ENCODE measurements at regions of chr9 and their contacts with region 1.

Region 1: DNA sequence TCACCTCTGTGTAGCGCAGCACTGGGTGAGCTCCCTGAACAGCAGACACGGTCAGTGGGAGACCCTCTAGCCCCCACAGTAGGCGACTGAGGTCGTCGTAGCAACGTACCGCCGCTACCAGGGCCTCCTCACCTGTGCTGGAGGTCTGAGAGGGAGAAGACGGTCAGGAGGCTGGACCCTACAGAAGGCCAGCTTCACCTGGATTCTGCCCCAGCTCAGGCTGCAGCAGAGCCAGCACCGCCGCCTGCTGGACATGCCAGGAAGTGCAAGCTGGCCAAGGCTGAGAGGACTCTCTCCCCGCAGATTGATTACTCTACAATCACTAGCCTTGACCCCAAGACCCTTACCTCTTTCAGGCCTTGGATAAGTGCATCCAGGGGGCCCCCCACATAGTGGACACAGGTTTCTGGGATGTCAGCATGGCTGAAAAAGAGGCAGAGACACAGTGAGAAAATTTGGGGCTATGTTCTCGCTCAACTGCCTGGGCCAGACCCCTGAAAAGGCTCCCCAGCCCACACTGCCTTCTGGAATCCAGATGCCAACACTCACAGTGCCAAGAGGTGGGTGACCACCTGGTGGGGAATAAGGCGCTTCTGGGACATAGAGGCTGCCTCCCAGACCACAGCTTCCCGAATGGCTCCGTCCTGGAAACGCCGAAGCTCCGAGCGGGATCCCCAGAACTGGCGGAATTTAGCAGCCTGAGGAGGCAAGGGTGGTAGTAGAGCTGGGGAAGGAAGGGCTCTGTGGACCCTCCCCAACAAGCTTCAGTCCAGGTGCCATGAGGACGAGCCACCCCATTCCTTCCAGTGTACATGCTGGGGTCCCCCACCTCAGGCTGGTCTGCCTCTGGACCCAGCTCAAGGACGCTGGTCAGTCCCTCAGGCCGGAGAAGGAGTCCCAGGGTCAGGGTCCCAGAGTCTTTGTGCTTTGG is 6.9 kb downstream of the NOL6 start:
- DNase-seq: peak; percentile 74
- H3K4me3 Mint-ChIP-seq: no peak overlapping the region
- H3K27ac Mint-ChIP-seq: no peak overlapping the region
- H3K4me1 Mint-ChIP-seq: peaks cover 8% of the 10 kb centered on the region
- H3K27me3 Mint-ChIP-seq: no peaks in the 10 kb centered on the region
- CTCF ChIP-seq: peak; percentile 91

Region 2: GRCh38 chr9:33233681-33234473 is 233.0 kb before region 1 on chr9:
- CTCF ChIA-PET with region 1: no interaction called
- intact Hi-C with region 1: no loop called
- DNase-seq: peak; percentile 90
- H3K4me3 Mint-ChIP-seq: peak overlapping the region; percentile 8
- H3K27ac Mint-ChIP-seq: peak overlapping the region; percentile 90
- H3K4me1 Mint-ChIP-seq: peaks cover 56% of the 10 kb centered on the region
- H3K27me3 Mint-ChIP-seq: no peaks in the 10 kb centered on the region
- CTCF ChIP-seq: no peak

Region 3: GRCh38 chr9:33350310-33350709 is 116.5 kb before region 1 on chr9:
- CTCF ChIA-PET with region 1: no interaction called
- intact Hi-C with region 1: no loop called
- DNase-seq: no peak
- H3K4me3 Mint-ChIP-seq: no peak overlapping the region
- H3K27ac Mint-ChIP-seq: no peak overlapping the region
- H3K4me1 Mint-ChIP-seq: peaks cover 10% of the 10 kb centered on the region
- H3K27me3 Mint-ChIP-seq: no peaks in the 10 kb centered on the region
- CTCF ChIP-seq: no peak

Region 4: GRCh38 chr9:33374634-33375213 is 92.1 kb before region 1 on chr9:
- CTCF ChIA-PET with region 1: interaction called, 27 read pairs
- intact Hi-C with region 1: loop called (anchors 1 kb)
- DNase-seq: peak; percentile 75
- H3K4me3 Mint-ChIP-seq: no peak overlapping the region
- H3K27ac Mint-ChIP-seq: no peak overlapping the region
- H3K4me1 Mint-ChIP-seq: no peaks in the 10 kb centered on the region
- H3K27me3 Mint-ChIP-seq: no peaks in the 10 kb centered on the region
- CTCF ChIP-seq: peak; percentile 64

Region 5: GRCh38 chr9:33403941-33404787 is 62.7 kb before region 1 on chr9:
- CTCF ChIA-PET with region 1: interaction called, 23 read pairs
- intact Hi-C with region 1: loop called (anchors 1 kb)
- DNase-seq: no peak
- H3K4me3 Mint-ChIP-seq: no peak overlapping the region
- H3K27ac Mint-ChIP-seq: no peak overlapping the region
- H3K4me1 Mint-ChIP-seq: peaks cover 10% of the 10 kb centered on the region
- H3K27me3 Mint-ChIP-seq: no peaks in the 10 kb centered on the region
- CTCF ChIP-seq: no peak

Region 6: DNA sequence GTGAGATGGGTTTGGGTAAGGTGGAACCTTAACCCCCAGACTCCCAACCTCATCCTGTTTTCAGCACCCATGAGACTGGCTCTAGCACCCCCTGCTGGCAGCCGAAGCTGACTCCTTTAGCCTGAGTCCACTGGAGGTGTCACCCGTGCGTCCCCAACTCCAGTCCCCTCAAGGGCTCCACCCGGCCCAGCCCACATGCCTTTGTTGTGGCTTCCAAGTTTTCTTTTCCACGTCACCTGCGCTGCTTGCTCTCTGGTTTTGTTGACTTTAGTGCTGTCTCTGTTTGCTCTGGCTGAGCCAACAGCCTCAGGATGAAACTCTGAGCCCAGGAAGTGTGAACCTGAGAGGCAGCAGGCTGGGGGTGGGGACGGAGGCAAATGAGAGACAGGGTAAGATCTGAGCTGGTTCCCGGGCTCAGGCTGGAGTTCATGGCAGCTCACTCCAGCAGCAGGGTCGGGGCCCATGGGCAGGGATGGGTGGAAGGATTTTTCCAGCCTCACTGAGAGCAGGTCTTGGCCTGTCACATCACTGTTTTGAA is 51.3 kb before region 1 on chr9:
- CTCF ChIA-PET with region 1: interaction called, 8 read pairs
- intact Hi-C with region 1: loop called (anchors 5 kb)
- DNase-seq: peak; percentile 88
- H3K4me3 Mint-ChIP-seq: peak overlapping the region; percentile 41
- H3K27ac Mint-ChIP-seq: peak overlapping the region; percentile 62
- H3K4me1 Mint-ChIP-seq: peaks cover 47% of the 10 kb centered on the region
- H3K27me3 Mint-ChIP-seq: peaks cover 13% of the 10 kb centered on the region
- CTCF ChIP-seq: peak; percentile 66

Region 7: DNA sequence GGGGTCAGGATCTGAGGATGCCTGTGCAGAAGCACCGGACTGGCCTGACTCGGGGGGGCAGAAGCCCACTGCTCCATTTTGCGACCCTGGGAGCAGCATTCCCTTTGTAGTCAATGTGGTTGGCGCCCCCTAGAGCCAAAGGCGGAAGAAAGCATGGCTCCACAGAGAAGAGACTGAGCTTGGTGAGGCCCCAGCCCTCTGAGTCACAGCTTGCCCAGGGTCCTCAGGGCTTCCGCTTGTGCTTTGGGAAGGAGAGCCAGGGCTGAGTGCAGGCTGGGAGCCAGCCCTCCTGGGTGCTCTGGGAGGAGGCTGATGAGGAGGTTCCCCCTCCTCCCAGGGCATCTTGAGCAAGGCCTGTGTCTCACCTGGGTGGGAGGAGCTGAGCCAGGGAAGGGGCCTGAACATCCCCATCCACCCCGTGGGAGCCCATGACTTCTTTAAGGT is 14.0 kb before region 1 on chr9:
- CTCF ChIA-PET with region 1: interaction called, 10 read pairs
- intact Hi-C with region 1: no loop called
- DNase-seq: peak; percentile 77
- H3K4me3 Mint-ChIP-seq: no peak overlapping the region
- H3K27ac Mint-ChIP-seq: peak overlapping the region; percentile 30
- H3K4me1 Mint-ChIP-seq: peaks cover 29% of the 10 kb centered on the region
- H3K27me3 Mint-ChIP-seq: no peaks in the 10 kb centered on the region
- CTCF ChIP-seq: peak; percentile 69

Measured in Calu3 (cell line).